ENCODE measurements at regions of chr10 and their contacts with region 1.

Region 1: GRCh38 chr10:47311932-47312662 is 10.2 kb upstream of the GDF2 start:
- DNase-seq: peak; percentile 90
- ATAC-seq: peak; percentile 94
- H3K4me3 ChIP-seq: no peak overlapping the region
- H3K27ac ChIP-seq: no peak overlapping the region
- H3K4me1 ChIP-seq: peaks cover 7% of the 10 kb centered on the region
- H3K27me3 ChIP-seq: peaks cover 4% of the 10 kb centered on the region
- CTCF ChIP-seq: peak; percentile 83

Region 2: DNA sequence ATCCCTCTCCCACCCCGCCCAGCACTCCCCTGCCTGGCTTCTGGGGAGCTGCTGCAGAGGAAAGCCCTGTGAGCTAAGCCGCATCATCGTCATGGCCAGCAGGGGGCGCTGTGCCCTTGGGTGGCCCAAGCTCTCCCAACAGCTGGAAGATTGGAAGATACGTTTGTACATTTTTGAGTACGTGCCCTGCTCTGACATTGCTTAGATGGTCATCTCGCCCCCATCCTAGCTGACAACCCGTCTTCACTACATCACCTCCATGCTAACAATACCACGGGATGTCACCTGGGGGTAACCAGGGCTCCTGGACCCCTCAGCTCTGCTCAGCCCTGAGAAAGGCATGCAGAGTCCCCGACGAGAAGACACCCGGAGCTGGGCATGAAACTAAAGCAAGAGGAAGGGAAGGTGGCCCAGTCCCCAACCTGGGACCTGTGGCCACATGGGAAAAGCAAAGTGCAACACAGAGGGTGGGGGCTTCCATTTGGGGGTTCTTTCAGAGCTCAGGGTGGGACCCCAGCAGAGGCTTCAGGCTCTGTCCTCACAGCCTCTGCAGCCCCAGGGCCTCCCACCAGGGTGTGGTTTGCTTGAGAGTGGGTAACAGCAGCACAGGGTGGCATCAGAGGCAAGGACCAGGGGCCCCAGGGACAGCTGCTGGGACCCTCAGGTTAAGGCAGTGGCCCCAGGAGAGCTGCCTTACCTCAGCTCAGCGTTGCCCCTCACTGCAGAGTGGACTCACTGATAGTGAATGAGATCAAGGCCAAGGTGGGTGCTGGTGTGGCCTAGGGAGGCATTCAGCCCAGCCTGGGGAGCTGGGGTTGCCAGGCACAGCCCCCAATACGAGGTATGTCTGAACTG is 264.2 kb before region 1 on chr10:
- intact Hi-C with region 1: loop called (anchors 10 kb)
- DNase-seq: peak; percentile 88
- ATAC-seq: peak; percentile 83
- H3K4me3 ChIP-seq: no peak overlapping the region
- H3K27ac ChIP-seq: no peak overlapping the region
- H3K4me1 ChIP-seq: peaks cover 8% of the 10 kb centered on the region
- H3K27me3 ChIP-seq: no peaks in the 10 kb centered on the region
- CTCF ChIP-seq: peak; percentile 90

Region 3: DNA sequence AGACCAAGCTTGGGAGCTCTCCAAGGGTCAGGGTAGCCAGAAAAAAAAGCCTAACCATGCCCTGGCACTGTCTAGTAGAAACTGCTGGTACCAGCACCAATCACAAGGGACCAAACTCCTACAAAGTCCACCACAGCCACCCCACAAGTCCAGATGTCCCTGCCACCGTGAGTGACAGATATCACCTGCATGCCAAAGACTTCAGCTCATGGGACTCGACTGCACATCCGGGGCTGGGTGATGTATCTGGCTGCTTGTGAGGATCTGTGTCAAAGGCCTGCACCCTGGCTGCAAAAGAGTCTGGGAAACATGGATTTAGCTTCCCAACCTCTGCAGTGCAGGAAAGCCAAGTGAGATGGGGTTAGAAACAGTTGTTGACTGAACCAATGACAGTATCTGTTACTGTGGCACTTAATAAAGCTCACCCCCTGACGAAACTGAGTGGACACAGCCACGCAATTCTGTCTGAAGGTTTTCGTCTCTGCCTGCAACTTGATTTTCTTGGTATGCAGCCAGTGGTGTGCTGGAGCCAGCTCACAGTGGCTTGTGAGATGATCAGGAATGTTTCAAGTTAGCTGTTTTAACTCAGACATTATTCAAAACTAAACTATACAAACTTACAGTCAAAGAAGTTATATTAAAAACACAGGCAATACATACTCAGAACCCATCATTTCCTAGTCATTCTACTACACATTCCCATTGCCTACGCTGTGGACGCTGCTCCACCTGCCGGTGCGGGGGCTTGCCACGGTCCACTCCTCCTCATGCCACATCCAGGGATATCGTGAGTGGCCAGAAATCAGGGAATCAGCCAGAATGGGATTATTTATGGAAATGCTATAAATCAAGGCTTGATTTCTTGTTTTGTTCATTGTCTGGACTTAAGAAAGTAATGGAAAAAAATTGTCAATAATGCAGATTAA is 62.8 kb after region 1 on chr10:
- intact Hi-C with region 1: no loop called
- DNase-seq: no peak
- ATAC-seq: no peak
- H3K4me3 ChIP-seq: no peak overlapping the region
- H3K27ac ChIP-seq: no peak overlapping the region
- H3K4me1 ChIP-seq: no peaks in the 10 kb centered on the region
- H3K27me3 ChIP-seq: peaks cover 3% of the 10 kb centered on the region
- CTCF ChIP-seq: no peak

Measured in upper lobe of right lung (tissue), 1 donor.